HEK293 (cell line): ENCODE measurements at regions of chr2 and their contacts with region 1.

Region 1: DNA sequence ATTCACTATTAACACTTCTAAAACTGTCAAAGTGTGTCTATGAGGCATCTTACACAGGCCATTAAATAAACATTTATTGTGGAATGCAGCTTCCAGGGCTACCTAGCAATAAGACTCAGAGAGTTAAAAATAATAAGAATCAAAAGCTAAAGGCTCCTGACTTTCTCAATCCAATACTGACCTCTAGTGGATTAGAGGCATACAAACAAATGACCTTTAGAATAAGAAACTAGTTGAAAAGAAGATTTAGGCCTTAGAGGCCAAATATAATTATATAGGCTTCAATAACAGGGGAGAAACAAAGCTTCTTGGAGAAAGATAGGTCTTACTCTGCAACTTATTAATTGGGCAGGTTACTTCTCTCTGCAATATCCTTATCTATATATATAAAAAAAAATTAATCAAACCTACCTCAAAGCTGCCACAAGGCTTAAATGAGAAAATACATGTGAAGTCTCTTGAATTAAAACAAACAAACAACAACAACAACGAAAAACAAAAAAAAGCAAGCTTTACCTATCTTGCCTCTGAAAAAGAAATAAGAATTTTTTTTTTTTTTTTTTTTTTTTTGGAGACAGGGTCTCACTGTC is 246.1 kb downstream of the EXOC6B start:
- H3K4me3 ChIP-seq: no peak overlapping the region
- H3K27ac ChIP-seq: no peak overlapping the region
- H3K4me1 ChIP-seq: no peaks in the 10 kb centered on the region
- CTCF ChIP-seq: no peak; the same call in 1 of the 2 replicates

Region 2: DNA sequence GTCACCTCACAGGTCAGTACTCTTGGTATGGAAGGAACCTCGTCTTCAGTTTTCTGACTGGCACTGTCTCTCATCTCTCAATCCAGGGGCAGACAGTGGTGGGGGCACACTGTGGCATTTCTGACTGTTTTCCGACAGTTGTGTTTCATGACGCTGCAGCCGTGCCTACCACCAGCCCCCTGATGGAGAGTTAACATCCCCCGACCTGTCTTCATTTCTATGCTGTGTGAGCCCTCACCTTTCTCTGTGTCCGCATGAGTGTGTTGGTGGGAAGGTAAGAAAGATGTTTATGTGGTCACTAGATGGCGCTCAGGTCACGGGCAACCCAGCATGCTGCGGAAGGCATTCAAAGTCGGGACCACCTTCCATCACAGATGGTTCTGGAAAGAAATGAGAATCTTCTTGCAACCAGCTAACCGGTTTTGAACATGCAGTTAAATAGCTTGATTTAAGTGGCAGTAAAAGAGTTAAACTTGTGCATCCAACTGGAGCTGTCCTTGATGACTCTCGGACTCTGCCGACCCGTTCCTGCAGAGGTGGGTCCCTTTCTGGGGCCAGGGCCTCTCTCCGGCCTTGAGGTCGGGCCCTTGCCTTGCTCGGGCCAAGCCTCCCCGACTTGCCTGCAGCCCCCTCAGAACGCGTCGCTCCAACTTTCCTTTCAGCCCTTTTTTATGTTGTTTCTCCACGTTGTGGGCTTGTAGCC is 1034.0 kb before region 1 on chr2:
- CTCF ChIA-PET with region 1: interaction called, 11 read pairs
- POLR2A ChIA-PET with region 1: no interaction called
- H3K4me3 ChIP-seq: no peak overlapping the region
- H3K27ac ChIP-seq: no peak overlapping the region
- H3K4me1 ChIP-seq: no peaks in the 10 kb centered on the region
- CTCF ChIP-seq: peak; percentile 78

Region 3: GRCh38 chr2:71550801-71551630 is 1028.7 kb before region 1 on chr2:
- CTCF ChIA-PET with region 1: interaction called, 11 read pairs
- POLR2A ChIA-PET with region 1: no interaction called
- H3K4me3 ChIP-seq: no peak overlapping the region
- H3K27ac ChIP-seq: no peak overlapping the region
- H3K4me1 ChIP-seq: no peaks in the 10 kb centered on the region
- CTCF ChIP-seq: no peak